ENCODE measurements at regions of chr1 and their contacts with region 1.

Region 1: GRCh38 chr1:77900687-77901293 is 12.4 kb downstream of the NEXN start:
- DNase-seq: peak in 1 of 2 donors; percentile 37
- H3K4me3 ChIP-seq: no peak overlapping the region
- H3K27ac ChIP-seq: peak overlapping the region; percentile 13 to 21
- H3K4me1 ChIP-seq: peaks cover 0 to 70% (median 7%) of the 10 kb centered on the region in 4 donors
- H3K27me3 ChIP-seq: no peaks in the 10 kb centered on the region
- CTCF ChIP-seq: peak; percentile 55 to 67

Region 2: DNA sequence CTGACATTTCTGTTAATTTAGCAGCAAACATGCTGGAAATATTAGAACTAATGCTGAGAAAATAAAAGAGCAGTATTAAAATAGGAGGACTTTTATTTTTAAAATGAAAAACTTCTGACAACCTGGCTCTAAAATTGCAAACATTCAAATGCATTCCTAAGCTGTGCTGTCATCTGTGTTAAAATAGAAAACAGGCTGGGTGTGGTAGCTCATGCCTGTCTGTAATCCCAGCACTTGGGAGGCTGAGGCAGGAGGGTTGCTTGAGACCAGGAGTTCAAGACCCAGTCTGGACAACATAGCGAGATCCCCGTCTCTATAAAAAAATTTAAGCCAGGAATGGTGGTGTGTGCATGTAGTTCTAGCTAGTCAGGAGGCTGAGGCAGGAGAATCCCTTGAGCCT is 76.7 kb before region 1 on chr1:
- intact Hi-C with region 1: loop called (anchors 5 kb)
- DNase-seq: no peak
- H3K4me3 ChIP-seq: no peak overlapping the region
- H3K27ac ChIP-seq: peak overlapping the region in 1 of 2 donors; percentile 58
- H3K4me1 ChIP-seq: peaks cover 0 to 45% (median 8%) of the 10 kb centered on the region in 4 donors
- H3K27me3 ChIP-seq: no peaks in the 10 kb centered on the region
- CTCF ChIP-seq: no peak

Region 3: GRCh38 chr1:77986810-77987209 is 86.0 kb after region 1 on chr1:
- intact Hi-C with region 1: no loop called
- DNase-seq: no peak
- H3K4me3 ChIP-seq: no peak overlapping the region
- H3K27ac ChIP-seq: no peak overlapping the region
- H3K4me1 ChIP-seq: peaks cover 0 to 23% (median 4%) of the 10 kb centered on the region in 4 donors
- H3K27me3 ChIP-seq: no peaks in the 10 kb centered on the region
- CTCF ChIP-seq: no peak